Right cardiac atrium (tissue), 5 donors: ENCODE measurements at regions of chr5 and their contacts with region 1.

Region 1: DNA sequence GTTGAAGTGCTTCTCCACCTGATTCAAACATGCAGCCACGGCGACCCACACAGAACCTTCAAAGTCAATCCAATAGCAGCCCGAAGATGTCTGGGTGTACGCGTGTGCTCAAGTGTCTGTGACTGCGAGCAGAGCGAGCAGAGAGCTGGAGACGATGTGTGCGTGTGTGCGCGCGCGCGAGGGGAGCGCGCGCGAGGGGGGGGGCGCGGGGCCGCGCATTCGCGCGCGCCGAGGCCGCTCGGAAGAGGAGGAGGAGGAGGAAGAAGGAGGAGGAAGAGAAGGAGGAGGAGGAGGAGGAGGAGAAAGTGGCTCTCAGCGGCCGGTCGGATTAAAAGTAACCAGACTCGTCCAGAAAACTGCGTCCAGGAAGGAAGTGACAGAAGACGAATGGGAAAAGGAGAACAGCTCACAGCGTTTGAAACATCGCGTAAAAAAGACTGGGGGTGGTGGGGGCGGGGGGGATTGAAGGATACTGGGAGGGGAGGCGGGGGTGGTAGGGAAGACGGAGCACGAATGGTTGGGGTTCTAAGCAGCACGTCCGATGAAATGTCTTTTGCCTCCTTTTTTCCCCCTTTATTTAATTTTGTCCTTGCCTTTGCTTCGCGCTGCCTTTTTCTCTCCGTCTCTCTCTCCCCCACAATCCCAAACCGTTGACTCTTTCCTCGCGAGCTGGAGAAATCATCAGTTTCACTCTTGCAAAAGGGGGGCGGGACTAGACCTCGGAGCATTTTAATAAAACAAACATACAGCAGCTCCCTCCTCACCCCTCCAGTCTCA is at the start of gene MEF2C:
- DNase-seq: peak; percentile 73 to 93 (median 90)
- ATAC-seq: peak; percentile 90 to 92
- H3K4me3 ChIP-seq: peak within 1 kb of the TSS; percentile 99
- H3K27ac ChIP-seq: peak within 1 kb of the TSS; percentile 99
- H3K4me1 ChIP-seq: no peaks in the 10 kb centered on the region
- H3K27me3 ChIP-seq: no peaks in the 10 kb centered on the region
- total RNA-seq, gene MEF2C: 57.4 to 78.4 (median 67.4) TPM

Region 2: DNA sequence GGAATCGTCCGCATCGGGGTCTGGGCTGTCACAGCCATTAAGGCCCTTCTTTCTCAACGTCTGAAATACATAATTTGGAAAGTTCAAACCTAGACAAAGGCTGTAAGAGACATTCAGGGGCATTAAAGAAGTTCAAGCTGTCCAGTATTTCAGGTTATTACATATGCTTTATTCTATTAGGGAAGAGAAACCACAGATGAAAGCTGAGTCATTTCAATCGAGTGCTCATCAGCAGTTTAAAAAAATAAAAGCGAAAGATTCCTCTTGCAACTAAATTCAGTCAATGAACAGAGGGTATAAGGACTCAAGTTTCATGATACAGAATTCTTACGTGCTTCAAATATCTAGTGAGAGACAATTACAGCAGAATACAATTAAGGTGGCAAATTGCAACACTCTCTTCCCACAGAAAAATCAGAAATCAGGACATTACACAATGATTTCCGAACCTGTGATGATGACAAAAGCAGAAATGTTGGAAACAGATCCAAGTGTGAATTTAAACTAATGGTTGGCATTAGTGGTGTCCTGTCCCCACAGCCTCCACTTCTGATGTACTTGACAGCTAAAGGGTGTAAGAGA is 121.9 kb before region 1 on chr5:
- intact Hi-C with region 1: no loop called
- DNase-seq: no peak
- ATAC-seq: no peak
- H3K4me3 ChIP-seq: no peak overlapping the region
- H3K27ac ChIP-seq: peak overlapping the region; percentile 21
- H3K4me1 ChIP-seq: peaks cover 3% of the 10 kb centered on the region
- H3K27me3 ChIP-seq: no peaks in the 10 kb centered on the region

Region 3: DNA sequence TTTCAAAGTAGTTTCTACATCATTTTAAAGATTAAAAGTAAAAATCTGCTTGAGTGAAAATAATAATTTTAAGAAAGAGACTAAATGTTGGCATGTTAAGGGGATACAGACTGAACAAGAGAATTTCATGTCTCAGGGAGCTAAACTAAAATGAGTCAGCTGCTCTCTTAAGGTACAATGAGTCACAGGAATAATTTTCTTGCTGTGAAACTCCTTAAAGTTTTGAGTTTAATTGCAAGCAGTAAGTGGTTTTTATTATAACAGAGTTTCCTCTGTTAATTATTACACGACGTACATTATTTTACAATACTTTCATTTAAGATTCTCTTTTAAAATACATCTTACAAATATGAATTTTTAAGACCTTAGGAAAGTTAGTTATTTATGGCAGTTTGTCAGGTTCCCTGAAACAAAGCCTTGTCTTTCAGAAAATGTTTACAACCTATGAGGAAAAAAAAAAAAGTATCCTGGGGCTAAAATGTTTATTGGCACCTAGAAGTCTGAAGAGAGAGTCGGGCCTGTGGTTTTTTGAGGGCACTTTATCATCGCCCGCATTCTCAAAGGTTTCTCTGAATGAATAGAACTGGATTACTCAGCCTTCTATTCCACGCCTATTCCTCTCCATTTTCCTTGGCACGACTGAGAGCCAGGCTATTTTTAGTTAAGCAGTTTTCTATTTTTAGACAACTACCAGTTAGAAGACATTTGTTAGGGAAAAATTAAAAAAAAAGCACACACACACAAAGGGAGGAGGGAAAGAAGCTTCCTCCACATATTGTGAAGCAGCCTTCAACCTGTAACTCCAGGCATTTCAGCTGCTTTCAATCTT is 97.6 kb before region 1 on chr5:
- intact Hi-C with region 1: loop called in 1 of 4 experiments (anchors 5 kb)
- DNase-seq: no peak
- ATAC-seq: peak; percentile 93 to 96
- H3K4me3 ChIP-seq: peak overlapping the region; percentile 56
- H3K27ac ChIP-seq: peak overlapping the region; percentile 83
- H3K4me1 ChIP-seq: peaks cover 4% of the 10 kb centered on the region
- H3K27me3 ChIP-seq: no peaks in the 10 kb centered on the region

Region 4: DNA sequence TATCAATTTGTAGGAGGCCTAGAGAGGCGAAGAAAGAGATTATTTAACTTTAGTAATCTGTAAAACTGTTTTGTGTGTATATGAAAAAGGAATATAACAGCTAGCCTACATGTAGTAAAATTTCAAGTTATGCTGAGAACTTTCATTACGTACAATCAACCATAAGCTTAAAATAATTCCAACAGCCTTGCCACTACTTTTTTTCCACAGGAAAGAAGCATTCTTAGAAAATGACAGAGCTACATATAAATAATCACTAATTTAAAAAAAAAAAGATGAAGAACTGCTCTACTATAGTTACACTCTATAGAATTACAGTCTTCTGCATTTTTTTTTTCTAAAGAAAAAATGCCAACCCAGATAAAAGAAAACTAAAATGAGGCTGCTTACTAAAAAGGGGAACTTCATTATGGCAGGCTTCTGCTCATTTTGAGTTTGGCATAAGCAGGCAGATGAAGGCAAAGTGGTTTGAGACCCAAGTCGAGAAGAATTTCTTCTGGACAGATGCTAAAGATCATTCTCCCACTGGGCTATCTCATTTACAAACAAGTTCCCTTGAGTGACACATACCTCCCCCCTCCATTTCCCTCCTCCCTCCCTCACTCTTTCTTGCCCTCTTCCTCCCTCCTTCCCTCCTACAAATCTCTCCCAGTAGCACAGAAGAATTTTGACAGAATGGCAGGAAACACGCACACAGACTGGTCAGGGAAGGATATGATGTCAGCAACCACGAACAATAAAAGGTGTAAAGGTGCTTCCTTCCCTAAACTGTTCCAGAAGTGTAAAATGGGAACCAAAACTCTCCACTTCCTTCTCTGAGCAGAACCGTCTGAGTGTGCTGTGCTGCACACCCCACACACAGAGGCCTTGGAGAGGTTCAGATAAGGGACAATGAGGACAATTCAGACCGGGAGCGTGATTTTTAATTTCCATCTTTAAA is 56.3 kb before region 1 on chr5:
- intact Hi-C with region 1: loop called in 3 of 4 experiments (anchors 5 kb)
- DNase-seq: peak; percentile 31 to 59 (median 58)
- ATAC-seq: peak; percentile 87 to 94
- H3K4me3 ChIP-seq: peak overlapping the region; percentile 18
- H3K27ac ChIP-seq: peak overlapping the region; percentile 96
- H3K4me1 ChIP-seq: peaks cover 7% of the 10 kb centered on the region
- H3K27me3 ChIP-seq: no peaks in the 10 kb centered on the region